ENCODE measurements at regions of chr1 and their contacts with region 1.

Region 1: DNA sequence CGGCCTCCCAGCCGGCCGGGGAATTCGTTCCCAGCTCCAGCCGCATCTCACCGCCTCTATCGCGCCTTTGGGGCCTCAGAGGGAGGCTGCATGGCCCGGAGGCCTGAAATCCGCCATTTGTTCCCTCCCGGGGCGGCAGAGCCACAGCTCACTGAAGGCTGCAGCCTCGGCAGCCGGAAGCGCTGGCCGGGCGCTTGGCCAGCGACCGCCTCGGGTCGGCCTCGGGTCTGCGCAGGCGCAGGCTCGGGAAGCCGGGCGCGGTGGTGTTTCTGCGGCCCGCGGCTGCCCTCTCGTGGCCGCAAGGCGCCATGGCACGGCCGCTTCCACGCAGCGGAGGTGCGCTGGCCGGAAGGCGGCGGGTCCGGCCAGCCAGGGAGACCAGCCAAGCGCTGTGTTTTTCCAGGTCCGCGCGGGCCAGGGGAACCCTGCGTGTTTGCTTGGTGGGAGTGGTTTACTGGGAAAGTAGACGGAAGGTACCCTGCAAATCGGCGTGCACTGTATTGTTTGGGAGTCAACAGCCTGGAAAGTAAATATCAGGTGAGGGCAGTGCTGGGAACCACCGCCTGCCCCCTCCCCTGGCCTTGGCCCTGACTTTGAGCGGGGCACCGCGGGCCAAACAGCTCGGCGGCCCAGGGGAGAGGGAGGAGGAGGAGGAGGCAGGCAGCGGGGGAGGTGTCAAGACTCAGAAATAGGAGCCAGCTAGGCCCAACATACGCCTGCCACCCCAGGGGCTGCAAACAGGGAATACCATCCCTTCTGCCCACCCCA is 52.7 kb upstream of the CD34 start:
- DNase-seq: peak; percentile 87
- ATAC-seq: peak; percentile 69
- H3K4me3 Mint-ChIP-seq: peak overlapping the region; percentile 81
- H3K27ac Mint-ChIP-seq: no peak overlapping the region
- H3K4me1 Mint-ChIP-seq: peaks cover 14% of the 10 kb centered on the region
- H3K27me3 Mint-ChIP-seq: peaks cover 60% of the 10 kb centered on the region
- CTCF ChIP-seq: peak; percentile 97

Region 2: GRCh38 chr1:207811920-207812720 is 151.5 kb before region 1 on chr1:
- CTCF ChIA-PET with region 1: interaction called, 23 read pairs
- POLR2A ChIA-PET with region 1: no interaction called
- DNase-seq: peak; percentile 55
- ATAC-seq: peak; percentile 88
- H3K4me3 Mint-ChIP-seq: no peak overlapping the region
- H3K27ac Mint-ChIP-seq: no peak overlapping the region
- H3K4me1 Mint-ChIP-seq: peaks cover 10% of the 10 kb centered on the region
- H3K27me3 Mint-ChIP-seq: no peaks in the 10 kb centered on the region
- CTCF ChIP-seq: no peak

Region 3: DNA sequence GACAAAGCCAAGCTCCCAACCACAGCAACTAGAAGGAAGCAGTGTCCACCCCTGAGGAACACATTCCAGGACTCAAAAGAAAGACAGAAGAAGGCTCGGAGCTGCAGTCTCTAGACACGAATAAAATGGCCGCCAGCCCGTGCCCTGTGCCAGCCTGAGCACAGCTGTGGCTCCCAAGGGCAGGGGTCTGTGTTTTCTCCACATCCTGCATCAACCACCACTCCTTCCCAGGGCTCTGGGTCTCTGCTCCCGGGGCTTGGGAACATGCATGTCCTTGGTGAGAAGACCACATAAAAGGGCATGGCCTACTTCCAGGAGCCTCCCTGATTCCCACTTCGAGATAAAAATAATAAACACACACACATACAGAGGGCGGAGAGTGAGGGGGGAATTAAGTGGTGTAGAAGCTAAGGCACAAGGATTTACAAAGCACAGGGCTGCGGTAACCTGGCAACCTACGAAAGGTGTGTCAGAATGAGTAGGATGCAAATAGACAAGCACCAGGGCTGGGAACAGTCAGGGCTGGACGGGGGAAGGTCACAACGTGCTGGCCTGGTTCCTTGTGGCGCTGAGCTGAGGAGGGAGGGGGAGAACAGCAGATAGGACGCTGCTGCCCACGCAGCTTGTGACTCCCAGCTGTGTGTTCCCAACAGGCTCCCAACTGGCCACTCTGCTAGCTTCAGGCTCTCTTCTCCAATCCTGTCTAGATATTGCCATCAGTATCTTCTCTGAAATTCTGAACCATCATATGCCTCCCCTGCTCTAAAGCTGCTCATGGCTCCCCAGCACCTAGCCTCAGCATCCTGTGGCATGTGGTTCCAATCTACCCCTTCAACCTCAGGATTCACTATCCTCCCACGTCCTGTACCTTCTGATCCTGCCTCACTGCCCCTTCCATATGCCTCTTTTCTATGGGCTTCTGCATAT is 125.2 kb before region 1 on chr1:
- CTCF ChIA-PET with region 1: interaction called, 24 read pairs
- POLR2A ChIA-PET with region 1: no interaction called
- DNase-seq: no peak
- ATAC-seq: no peak
- H3K4me3 Mint-ChIP-seq: no peak overlapping the region
- H3K27ac Mint-ChIP-seq: no peak overlapping the region
- H3K4me1 Mint-ChIP-seq: no peaks in the 10 kb centered on the region
- H3K27me3 Mint-ChIP-seq: no peaks in the 10 kb centered on the region
- CTCF ChIP-seq: no peak

Region 4: GRCh38 chr1:207885129-207886032 is 78.2 kb before region 1 on chr1:
- CTCF ChIA-PET with region 1: interaction called, 198 read pairs
- POLR2A ChIA-PET with region 1: interaction called, 6 read pairs
- DNase-seq: peak; percentile 79
- ATAC-seq: peak; percentile 95
- H3K4me3 Mint-ChIP-seq: no peak overlapping the region
- H3K27ac Mint-ChIP-seq: no peak overlapping the region
- H3K4me1 Mint-ChIP-seq: peaks cover 7% of the 10 kb centered on the region; the same call in 1 of the 2 replicates
- H3K27me3 Mint-ChIP-seq: peaks cover 8% of the 10 kb centered on the region
- CTCF ChIP-seq: peak; percentile 90

Region 5: GRCh38 chr1:207917080-207917479 is 46.5 kb before region 1 on chr1:
- CTCF ChIA-PET with region 1: interaction called, 15 read pairs
- POLR2A ChIA-PET with region 1: no interaction called
- DNase-seq: no peak
- ATAC-seq: no peak
- H3K4me3 Mint-ChIP-seq: no peak overlapping the region
- H3K27ac Mint-ChIP-seq: no peak overlapping the region
- H3K4me1 Mint-ChIP-seq: peaks cover 6% of the 10 kb centered on the region; the same call in 1 of the 2 replicates
- H3K27me3 Mint-ChIP-seq: peaks cover 17% of the 10 kb centered on the region
- CTCF ChIP-seq: no peak

Region 6: GRCh38 chr1:207952617-207953542 is 10.7 kb before region 1 on chr1:
- CTCF ChIA-PET with region 1: interaction called, 17 read pairs
- POLR2A ChIA-PET with region 1: no interaction called
- DNase-seq: no peak
- ATAC-seq: no peak
- H3K4me3 Mint-ChIP-seq: no peak overlapping the region
- H3K27ac Mint-ChIP-seq: no peak overlapping the region
- H3K4me1 Mint-ChIP-seq: peaks cover 11% of the 10 kb centered on the region
- H3K27me3 Mint-ChIP-seq: peaks cover 24% of the 10 kb centered on the region
- CTCF ChIP-seq: no peak

Region 7: DNA sequence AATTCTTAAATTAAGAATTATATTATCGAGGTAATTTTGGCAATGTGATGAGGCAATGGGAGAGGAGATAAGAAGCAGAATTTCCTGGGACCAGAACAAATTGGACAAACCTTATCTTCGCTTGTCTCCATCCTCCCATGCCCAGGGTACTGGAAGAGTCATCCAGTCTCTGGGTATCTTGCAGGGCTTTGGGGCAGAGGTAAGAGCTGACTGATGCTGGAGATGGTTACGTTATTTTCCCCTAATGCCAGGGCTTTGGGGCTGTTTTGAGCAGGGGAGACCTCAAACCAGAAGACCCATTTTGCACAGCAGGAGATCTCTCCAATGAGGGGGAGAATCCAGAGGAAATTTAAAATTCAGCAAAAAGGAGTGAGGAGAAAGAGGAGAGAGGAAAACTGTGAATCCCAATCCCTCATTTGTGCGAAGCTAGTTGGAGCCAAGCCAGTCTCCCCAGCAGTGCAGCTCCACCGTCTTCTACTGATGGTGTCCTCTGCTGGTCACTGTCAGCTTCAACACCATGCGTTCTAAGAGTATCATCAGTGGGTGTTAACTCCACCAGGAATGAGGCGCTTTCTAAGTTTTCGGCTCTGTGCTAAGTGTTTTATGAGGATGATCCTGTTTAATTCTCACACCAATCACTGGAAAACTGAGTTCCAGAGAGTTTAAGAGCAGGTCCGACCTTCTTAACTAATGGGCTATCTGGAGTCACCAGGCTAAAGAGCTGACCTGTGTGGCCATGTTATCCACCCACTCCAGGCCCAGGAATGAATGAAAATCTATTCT is 34.1 kb after region 1 on chr1:
- CTCF ChIA-PET with region 1: interaction called, 20 read pairs
- POLR2A ChIA-PET with region 1: no interaction called
- DNase-seq: peak; percentile 75
- ATAC-seq: peak; percentile 84
- H3K4me3 Mint-ChIP-seq: no peak overlapping the region
- H3K27ac Mint-ChIP-seq: no peak overlapping the region
- H3K4me1 Mint-ChIP-seq: peaks cover 25% of the 10 kb centered on the region
- H3K27me3 Mint-ChIP-seq: peaks cover 10% of the 10 kb centered on the region
- CTCF ChIP-seq: peak; percentile 63